Right cardiac atrium (tissue), 5 donors: ENCODE measurements at regions of chr18 and their contacts with region 1.

Region 1: GRCh38 chr18:3135536-3135935 is 84.2 kb downstream of the MYOM1 start:
- DNase-seq: no peak
- ATAC-seq: peak in 1 of 2 donors; percentile 40
- H3K4me3 ChIP-seq: no peak overlapping the region
- H3K27ac ChIP-seq: no peak overlapping the region
- H3K4me1 ChIP-seq: no peaks in the 10 kb centered on the region
- H3K27me3 ChIP-seq: no peaks in the 10 kb centered on the region

Region 2: DNA sequence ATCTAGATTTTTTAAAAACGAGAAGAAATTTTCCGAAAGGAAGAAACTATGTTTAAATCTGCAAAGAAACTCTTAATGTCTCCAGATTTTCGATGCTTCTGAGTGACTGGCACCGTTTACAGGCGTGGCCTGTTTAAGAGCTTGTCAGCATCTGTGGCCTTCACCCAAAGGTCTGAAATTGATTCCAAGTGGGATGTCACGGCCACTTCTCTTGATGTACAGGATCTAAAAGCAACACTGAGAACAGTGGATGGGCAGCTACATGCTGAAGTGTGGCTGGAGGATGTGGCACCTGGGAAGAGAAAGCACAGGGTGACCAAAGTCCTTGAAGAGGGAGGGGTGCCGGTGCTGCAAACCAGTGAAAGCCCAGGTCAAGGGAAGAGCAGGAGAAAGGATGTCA is 260.8 kb before region 1 on chr18:
- intact Hi-C with region 1: no loop called
- DNase-seq: no peak
- ATAC-seq: peak in 1 of 2 donors; percentile 22
- H3K4me3 ChIP-seq: no peak overlapping the region
- H3K27ac ChIP-seq: no peak overlapping the region
- H3K4me1 ChIP-seq: no peaks in the 10 kb centered on the region
- H3K27me3 ChIP-seq: no peaks in the 10 kb centered on the region

Region 3: GRCh38 chr18:2932247-2933181 is 203.0 kb before region 1 on chr18:
- intact Hi-C with region 1: loop called in 1 of 4 experiments (anchors 10 kb)
- DNase-seq: no peak
- ATAC-seq: peak; percentile 55 to 58
- H3K4me3 ChIP-seq: no peak overlapping the region
- H3K27ac ChIP-seq: no peak overlapping the region
- H3K4me1 ChIP-seq: no peaks in the 10 kb centered on the region
- H3K27me3 ChIP-seq: no peaks in the 10 kb centered on the region

Region 4: GRCh38 chr18:3037423-3037915 is 98.1 kb before region 1 on chr18:
- intact Hi-C with region 1: no loop called
- DNase-seq: no peak
- ATAC-seq: peak; percentile 65 to 67
- H3K4me3 ChIP-seq: no peak overlapping the region
- H3K27ac ChIP-seq: no peak overlapping the region
- H3K4me1 ChIP-seq: no peaks in the 10 kb centered on the region
- H3K27me3 ChIP-seq: no peaks in the 10 kb centered on the region